ENCODE measurements at regions of chr18 and their contacts with region 1.

Region 1: DNA sequence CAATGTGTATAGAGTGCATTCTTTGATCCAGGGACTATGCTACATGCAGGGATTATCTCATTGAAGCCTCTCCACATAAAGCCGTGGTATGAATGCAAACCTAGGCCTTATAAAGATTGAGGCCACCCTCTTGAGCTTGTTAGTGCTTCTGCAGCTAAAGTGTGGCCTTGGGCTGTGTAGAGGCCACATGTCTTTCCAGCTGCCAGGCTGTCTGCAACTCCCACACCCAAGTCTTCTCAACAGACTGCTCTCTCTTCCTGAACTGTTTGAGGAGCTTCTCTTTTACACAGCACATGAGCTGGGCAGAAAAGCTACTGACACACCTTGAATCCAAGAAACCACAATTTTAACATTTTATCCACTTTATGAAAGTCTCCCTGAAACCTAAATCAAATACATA is 119.2 kb upstream of the MEX3C start:
- DNase-seq: no peak

Region 2: DNA sequence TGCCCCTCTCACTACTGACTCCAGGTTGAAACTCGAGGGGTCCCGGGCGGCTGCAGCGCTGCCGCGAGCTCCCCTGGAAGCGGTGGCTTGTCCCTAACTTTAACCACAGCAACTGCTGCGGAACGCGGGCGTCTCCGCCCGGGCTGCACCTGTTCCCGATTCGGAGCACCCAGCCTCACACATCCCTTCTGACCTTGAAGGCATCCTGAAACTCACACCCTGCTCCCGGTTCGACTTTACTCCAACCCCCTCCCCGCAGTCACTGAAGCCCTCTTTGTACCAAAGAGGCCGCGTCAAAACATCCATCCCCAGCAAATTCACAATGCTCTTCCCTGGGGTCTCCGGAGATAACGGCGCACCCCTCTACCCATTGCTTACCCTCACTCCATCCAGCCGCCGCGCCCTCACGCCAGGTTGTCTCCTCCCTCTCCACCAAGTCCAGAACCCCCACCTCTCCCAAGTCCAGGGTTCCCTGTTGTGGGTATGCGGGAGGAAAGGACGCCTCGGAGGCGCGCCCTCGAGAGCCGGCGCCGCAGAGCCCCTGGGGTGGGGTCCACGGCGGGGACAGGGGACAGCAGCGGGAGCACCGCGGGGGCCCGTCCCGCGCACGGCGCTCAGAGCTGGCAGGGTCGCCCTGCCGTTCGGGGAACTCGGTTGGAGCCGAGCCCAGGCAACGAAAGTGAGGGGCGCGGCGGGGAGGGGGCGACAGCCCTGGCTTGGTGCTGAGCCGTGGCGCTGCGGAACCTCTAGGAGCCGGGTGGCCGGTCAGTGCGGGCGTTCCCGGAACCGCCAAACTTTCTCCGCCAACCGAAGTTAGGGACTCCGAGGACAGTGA is 1122.7 kb before region 1 on chr18:
- intact Hi-C with region 1: no loop called
- DNase-seq: no peak

Region 3: GRCh38 chr18:50469380-50469781 is 847.3 kb before region 1 on chr18:
- intact Hi-C with region 1: no loop called
- DNase-seq: no peak

Region 4: DNA sequence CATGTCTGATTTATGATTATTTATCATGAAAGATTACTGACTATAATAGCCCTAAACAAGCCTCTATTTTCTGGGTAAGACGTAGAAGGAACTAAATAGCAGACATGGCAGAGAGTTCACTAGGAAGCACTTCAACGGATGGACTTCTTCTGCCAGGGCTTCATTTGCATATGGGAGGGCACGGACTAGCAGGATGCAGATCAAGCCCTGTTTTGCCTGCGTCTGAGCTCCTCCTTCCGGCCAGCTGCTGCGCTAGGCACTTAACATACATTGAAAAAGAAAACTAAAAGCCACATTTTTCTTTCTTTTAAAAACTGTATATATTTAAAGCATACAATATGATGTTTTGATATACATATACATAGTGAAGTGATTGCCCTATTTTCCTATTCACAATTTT is 220.8 kb after region 1 on chr18:
- intact Hi-C with region 1: loop called in 1 of 2 experiments (anchors 5 kb)
- DNase-seq: no peak